CD8-positive, alpha-beta T cell (primary cell): ENCODE measurements at regions of chr11 and their contacts with region 1.

Region 1: GRCh38 chr11:99671808-99672409 is 651.2 kb downstream of the CNTN5 start:
- DNase-seq: no peak
- ATAC-seq: no peak
- H3K4me3 ChIP-seq: no peak overlapping the region
- H3K4me3 Mint-ChIP-seq: no peak overlapping the region
- H3K27ac ChIP-seq: no peak overlapping the region
- H3K27ac Mint-ChIP-seq: no peak overlapping the region
- H3K4me1 ChIP-seq: no peaks in the 10 kb centered on the region
- H3K4me1 Mint-ChIP-seq: no peaks in the 10 kb centered on the region
- H3K27me3 ChIP-seq: no peaks in the 10 kb centered on the region
- H3K27me3 Mint-ChIP-seq: no peaks in the 10 kb centered on the region
- CTCF ChIP-seq: no peak

Region 2: GRCh38 chr11:99739464-99740089 is 67.7 kb after region 1 on chr11:
- CTCF ChIA-PET with region 1: no interaction called
- POLR2A ChIA-PET with region 1: no interaction called
- intact Hi-C with region 1: loop called in 1 of 2 experiments (anchors 1 kb)
- DNase-seq: no peak
- ATAC-seq: no peak
- H3K4me3 ChIP-seq: no peak overlapping the region
- H3K4me3 Mint-ChIP-seq: no peak overlapping the region
- H3K27ac ChIP-seq: no peak overlapping the region
- H3K27ac Mint-ChIP-seq: no peak overlapping the region
- H3K4me1 ChIP-seq: no peaks in the 10 kb centered on the region
- H3K4me1 Mint-ChIP-seq: no peaks in the 10 kb centered on the region
- H3K27me3 ChIP-seq: no peaks in the 10 kb centered on the region
- H3K27me3 Mint-ChIP-seq: no peaks in the 10 kb centered on the region
- CTCF ChIP-seq: no peak